GM10248 (cell line): ENCODE measurements at regions of chr4 and their contacts with region 1.

Region 1: DNA sequence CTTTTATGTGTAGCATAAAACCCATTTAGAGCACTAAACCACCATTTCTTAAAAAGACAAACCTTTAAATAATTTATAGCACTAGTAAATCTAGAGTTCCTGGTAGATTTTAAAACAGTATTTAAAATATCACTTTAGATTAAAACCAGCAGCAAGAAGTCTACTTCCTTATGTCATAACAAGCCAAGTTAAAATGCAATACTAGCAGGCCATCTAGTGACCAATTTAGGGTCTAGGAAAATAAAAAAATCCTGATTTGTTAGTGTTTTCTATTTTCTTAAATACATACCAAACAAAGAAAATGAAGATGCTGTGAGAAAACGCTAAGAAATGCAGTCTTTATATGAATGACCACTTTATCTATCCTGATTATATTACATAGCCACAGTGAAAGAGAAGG is 53.9 kb downstream of the PAPSS1 start:
- DNase-seq: no peak
- CTCF ChIP-seq: peak; percentile 20

Region 2: DNA sequence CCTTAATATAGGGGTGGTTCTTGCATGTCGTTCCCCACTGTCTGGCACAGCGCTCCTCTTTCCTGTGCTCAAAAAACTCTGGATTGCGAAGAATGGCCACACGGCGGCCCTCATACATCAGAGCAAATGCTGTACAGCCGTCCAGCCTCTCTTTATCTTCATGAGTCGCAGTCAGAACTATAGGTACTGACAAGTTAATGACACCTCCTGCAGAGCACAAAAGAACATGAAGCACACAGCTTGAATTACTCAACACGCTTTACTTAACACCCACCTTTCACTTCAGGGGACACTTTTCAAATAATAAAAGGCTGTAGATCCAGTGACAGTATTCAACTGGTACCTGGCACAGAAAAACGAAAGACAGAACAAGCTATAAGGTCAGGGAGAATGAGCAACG is 11.4 kb before region 1 on chr4:
- CTCF ChIA-PET with region 1: interaction called, 18 read pairs
- POLR2A ChIA-PET with region 1: no interaction called
- DNase-seq: no peak
- CTCF ChIP-seq: no peak

Region 3: GRCh38 chr4:107774681-107775080 is 108.5 kb after region 1 on chr4:
- CTCF ChIA-PET with region 1: no interaction called
- POLR2A ChIA-PET with region 1: no interaction called
- DNase-seq: no peak
- CTCF ChIP-seq: no peak

Region 4: GRCh38 chr4:107922486-107923483 is 256.7 kb after region 1 on chr4:
- CTCF ChIA-PET with region 1: no interaction called
- POLR2A ChIA-PET with region 1: no interaction called
- DNase-seq: no peak
- CTCF ChIP-seq: no peak